Heart right ventricle (tissue), 16 donors: ENCODE measurements at regions of chr14 and their contacts with region 1.

Region 1: DNA sequence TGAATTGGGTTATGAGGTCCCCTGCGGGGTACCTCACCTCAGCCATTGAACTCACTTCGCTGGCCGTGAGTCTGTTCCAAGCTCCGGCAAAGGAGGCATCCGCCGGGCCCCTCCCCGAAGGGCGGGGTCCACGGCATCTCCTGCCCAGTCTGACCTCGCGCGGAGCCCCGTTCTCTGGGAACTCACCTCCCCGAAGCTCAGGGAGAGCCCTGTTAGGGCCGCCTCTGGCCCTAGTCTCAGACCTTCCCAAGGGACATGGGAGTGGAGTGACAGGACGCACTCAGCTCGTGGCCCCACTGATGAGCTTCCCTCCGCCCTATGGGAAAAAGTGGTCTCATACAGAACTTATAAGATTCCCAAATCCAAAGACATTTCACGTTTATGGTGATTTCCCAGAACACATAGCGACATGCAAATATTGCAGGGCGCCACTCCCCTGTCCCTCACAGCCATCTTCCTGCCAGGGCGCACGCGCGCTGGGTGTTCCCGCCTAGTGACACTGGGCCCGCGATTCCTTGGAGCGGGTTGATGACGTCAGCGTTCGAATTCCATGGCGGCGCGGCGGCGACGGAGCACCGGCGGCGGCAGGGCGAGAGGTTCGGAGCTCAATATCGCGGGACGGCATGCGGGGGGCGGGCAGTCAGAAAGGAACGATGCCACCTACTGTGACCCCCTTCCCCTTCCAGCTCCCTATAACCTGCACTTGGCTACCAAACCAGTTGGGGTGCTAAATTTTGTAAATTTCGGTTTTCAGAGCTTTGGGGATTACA is at the start of gene PARP2:
- DNase-seq: peak; percentile 96 to 97
- ATAC-seq: peak; percentile 98 to 99 (median 98)
- H3K4me3 ChIP-seq: peak within 1 kb of the TSS; percentile 55 to 87 (median 68)
- H3K27ac ChIP-seq: peak within 1 kb of the TSS; percentile 67 to 94 (median 89)
- H3K4me1 ChIP-seq: peaks cover 0 to 16% (median 7%) of the 10 kb centered on the region in 9 donors
- H3K27me3 ChIP-seq: no peaks in the 10 kb centered on the region
- CTCF ChIP-seq: peak in 1 of 9 donors; percentile 5
- total RNA-seq, gene PARP2: 13.6 to 18.4 (median 16.0) TPM

Region 2: DNA sequence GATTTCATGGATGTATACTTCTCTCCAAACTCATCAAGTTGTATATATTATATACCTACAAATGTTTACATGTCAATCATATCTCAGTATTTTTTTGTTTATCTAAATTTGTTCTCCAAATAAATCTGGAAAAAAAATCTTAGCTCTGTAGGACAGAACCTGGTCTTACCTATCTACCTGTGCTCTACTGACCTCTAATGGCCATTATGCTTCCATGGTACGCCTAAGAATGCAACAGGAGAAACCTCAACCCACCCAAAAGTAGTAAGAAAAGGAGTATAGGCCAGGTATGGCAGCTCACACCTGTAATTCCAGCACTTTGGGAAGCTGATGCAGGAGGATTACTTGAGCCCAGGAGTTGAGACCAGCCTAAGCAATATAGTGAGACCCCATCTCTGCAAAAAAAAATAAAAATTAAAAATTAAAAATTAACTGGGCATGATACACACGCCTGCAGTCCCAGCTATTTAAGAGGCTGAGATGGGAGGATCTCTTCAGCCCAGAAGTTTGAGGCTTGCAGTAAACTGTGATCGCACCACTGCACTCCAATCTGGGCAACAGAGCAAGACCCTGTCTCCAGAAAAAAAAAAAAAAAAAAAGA is 95.5 kb before region 1 on chr14:
- intact Hi-C with region 1: no loop called
- DNase-seq: no peak
- ATAC-seq: no peak
- H3K4me3 ChIP-seq: no peak overlapping the region
- H3K27ac ChIP-seq: no peak overlapping the region
- H3K4me1 ChIP-seq: no peaks in the 10 kb centered on the region
- H3K27me3 ChIP-seq: no peaks in the 10 kb centered on the region
- CTCF ChIP-seq: no peak

Region 3: GRCh38 chr14:20327005-20327869 is 16.0 kb before region 1 on chr14:
- intact Hi-C with region 1: loop called in 2 of 10 experiments (anchors 2 kb)
- DNase-seq: peak in 1 of 2 donors; percentile 46
- ATAC-seq: peak in 3 of 8 donors; percentile 54 to 64 (median 55)
- H3K4me3 ChIP-seq: no peak overlapping the region
- H3K27ac ChIP-seq: peak overlapping the region in 3 of 10 donors; percentile 3 to 47 (median 6)
- H3K4me1 ChIP-seq: peaks cover 0 to 36% (median 23%) of the 10 kb centered on the region in 9 donors
- H3K27me3 ChIP-seq: no peaks in the 10 kb centered on the region
- CTCF ChIP-seq: peak; percentile 57 to 90 (median 81)

Region 4: DNA sequence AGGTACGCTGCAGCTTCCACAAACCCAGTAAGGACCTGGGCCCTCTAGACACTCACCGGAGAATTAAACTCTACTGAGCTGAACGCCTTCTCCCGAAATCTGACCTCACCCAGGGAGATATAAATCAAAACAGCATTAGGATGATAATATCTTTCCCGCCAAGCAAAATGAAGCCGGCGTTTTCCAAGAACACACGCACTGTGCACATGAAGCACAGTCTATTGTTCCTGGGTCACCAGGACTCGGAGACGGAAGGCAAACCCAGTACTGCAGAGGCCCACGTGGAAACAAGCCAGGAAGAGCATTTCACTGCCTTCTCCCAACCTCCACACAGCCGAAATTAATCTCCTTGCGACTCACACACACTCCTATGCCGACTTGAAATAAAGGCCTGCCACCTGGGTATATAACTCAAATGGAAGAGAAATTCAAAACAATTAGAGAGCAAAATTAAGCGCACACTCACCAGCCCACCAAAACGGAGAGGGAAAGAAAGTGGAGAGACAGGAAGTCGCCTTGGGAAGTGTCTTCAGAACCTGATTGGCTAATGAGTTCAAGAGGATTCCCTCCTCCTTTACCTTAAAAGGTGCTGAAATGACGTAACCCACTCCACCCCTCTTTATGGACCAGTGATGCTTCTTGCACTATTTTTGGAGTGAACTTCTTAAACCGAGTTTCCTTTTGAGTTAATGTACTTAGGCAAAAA is 10.3 kb before region 1 on chr14 and contains the start of gene CCNB1IP1:
- intact Hi-C with region 1: loop called in 3 of 10 experiments (anchors 1 kb)
- DNase-seq: peak; percentile 29 to 83
- ATAC-seq: peak; percentile 96 to 100 (median 99)
- H3K4me3 ChIP-seq: peak within 1 kb of the TSS; percentile 29 to 75 (median 68)
- H3K27ac ChIP-seq: peak within 1 kb of the TSS; percentile 49 to 89 (median 84)
- H3K4me1 ChIP-seq: peaks cover 0 to 28% (median 23%) of the 10 kb centered on the region in 9 donors
- H3K27me3 ChIP-seq: no peaks in the 10 kb centered on the region
- CTCF ChIP-seq: no peak
- total RNA-seq, gene CCNB1IP1: 35.7 to 69.9 (median 56.0) TPM

Region 5: GRCh38 chr14:20413045-20413799 is 69.9 kb after region 1 on chr14 and contains the start of gene TEP1:
- intact Hi-C with region 1: loop called in 5 of 10 experiments (anchors 2 to 10 kb)
- DNase-seq: peak; percentile 89
- ATAC-seq: peak; percentile 94 to 98 (median 98)
- H3K4me3 ChIP-seq: peak within 1 kb of the TSS; percentile 63 to 92 (median 75)
- H3K27ac ChIP-seq: peak within 1 kb of the TSS; percentile 40 to 98 (median 95)
- H3K4me1 ChIP-seq: peaks cover 0 to 35% (median 13%) of the 10 kb centered on the region in 9 donors
- H3K27me3 ChIP-seq: no peaks in the 10 kb centered on the region
- CTCF ChIP-seq: no peak
- total RNA-seq, gene TEP1: 6.9 to 17.8 (median 8.6) TPM

Region 6: GRCh38 chr14:20454516-20455354 is 111.5 kb after region 1 on chr14 and contains the starts of genes APEX1 and OSGEP:
- intact Hi-C with region 1: loop called in 4 of 10 experiments (anchors 5 to 10 kb)
- DNase-seq: peak; percentile 96 to 99
- ATAC-seq: peak; percentile 96 to 99 (median 97)
- H3K4me3 ChIP-seq: peak within 1 kb of the TSS; percentile 66 to 98 (median 74)
- H3K27ac ChIP-seq: peak within 1 kb of the TSS; percentile 83 to 97 (median 91)
- H3K4me1 ChIP-seq: peaks cover 0 to 62% (median 33%) of the 10 kb centered on the region in 9 donors
- H3K27me3 ChIP-seq: no peaks in the 10 kb centered on the region
- CTCF ChIP-seq: no peak
- total RNA-seq, gene APEX1: 57.1 to 103 (median 70.6) TPM
- total RNA-seq, gene OSGEP: 17.6 to 25.3 (median 21.8) TPM

Region 7: DNA sequence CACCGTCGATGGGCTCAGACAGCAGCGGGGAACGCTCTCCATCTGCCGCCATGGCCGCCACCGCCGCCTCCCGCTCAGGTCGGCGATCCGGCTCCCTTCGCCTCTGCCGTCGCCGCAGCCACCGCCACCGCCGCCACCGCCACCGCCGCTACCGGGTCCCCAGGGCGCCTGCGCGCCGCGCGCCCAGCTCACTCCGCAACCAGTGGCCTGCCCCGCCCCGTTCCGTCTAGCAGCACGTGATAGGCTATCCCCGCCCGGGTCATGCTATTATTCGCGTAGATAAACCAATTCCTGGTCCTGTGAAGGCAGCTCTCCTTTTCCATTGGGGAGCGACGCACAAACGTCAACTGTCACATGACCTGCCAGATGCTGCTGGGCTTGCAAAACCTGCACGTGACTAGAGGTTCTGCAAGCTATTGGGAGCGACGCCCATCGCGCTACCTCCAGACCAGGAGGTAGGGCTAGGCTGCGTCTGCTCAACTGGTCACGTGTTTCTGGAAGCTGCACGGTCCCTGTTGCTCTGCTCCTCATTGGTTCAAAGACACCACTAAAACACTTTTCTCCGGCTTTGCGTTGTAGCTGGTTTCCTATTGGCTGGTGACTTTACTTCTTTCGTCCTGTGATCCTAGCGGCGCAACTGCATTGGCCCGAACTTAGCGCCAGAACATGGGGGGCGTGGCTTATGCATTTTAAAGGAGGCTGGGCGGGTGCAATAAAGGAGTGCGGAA is 118.2 kb after region 1 on chr14 and contains the start of gene PIP4P1:
- intact Hi-C with region 1: loop called in 5 of 10 experiments (anchors 5 to 10 kb)
- DNase-seq: peak; percentile 97 to 99
- ATAC-seq: peak; percentile 96 to 99 (median 98)
- H3K4me3 ChIP-seq: peak within 1 kb of the TSS; percentile 81 to 100 (median 94)
- H3K27ac ChIP-seq: peak within 1 kb of the TSS; percentile 77 to 96 (median 93)
- H3K4me1 ChIP-seq: peaks cover 9 to 49% (median 24%) of the 10 kb centered on the region in 9 donors
- H3K27me3 ChIP-seq: no peaks in the 10 kb centered on the region
- CTCF ChIP-seq: no peak
- total RNA-seq, gene PIP4P1: 15.5 to 25.3 (median 18.7) TPM